ENCODE measurements at regions of chr11 and their contacts with region 1.

Region 1: GRCh38 chr11:115605871-115606497 is 101.8 kb upstream of the CADM1 start:
- DNase-seq: no peak
- H3K4me3 ChIP-seq: no peak overlapping the region
- H3K27me3 ChIP-seq: peaks cover 6% of the 10 kb centered on the region
- CTCF ChIP-seq: no peak

Region 2: DNA sequence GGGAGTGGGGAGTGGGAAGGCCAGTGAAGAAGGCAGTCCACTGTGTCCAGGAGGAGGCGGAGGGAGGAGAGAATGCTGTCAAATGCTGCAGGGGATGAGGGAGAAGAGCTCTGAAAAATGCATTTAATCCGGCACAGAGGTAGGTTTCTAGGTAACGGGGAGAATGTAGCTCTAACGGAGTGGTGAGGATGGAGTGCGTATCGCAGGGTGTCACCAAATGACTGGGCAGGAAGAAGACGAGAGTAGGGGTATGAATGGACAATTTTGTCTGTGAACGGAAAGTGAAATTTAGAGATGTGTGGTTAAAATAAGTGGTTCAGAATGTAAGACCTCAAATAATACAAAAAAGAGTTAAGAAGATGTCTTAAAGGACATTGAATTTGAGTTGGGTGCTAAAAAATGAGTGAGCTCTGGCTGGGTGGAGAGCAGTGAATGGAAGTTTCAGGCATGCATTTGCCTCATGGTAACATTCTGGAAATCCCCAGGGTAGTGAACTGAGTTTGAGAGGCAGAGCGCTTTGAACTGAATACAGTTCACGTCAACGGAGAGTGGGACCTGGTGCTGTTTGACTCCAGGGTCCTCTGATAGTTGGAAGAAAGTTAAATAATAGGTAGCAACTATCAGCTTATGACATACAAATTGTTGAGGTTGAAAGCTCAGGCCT is 20.5 kb before region 1 on chr11:
- CTCF ChIA-PET with region 1: no interaction called
- POLR2A ChIA-PET with region 1: interaction called, 12 read pairs
- DNase-seq: no peak
- H3K4me3 ChIP-seq: no peak overlapping the region
- H3K27me3 ChIP-seq: peaks cover 1% of the 10 kb centered on the region; the same call in 1 of the 2 replicates
- CTCF ChIP-seq: no peak